B cell (primary cell): ENCODE measurements at regions of chr18 and their contacts with region 1.

Region 1: GRCh38 chr18:50429207-50429948 is 54.5 kb downstream of the SKA1 start:
- DNase-seq: peak; percentile 48
- ATAC-seq: no peak
- H3K4me3 ChIP-seq: no peak overlapping the region
- H3K4me3 Mint-ChIP-seq: no peak overlapping the region
- H3K27ac ChIP-seq: no peak overlapping the region
- H3K27ac Mint-ChIP-seq: no peak overlapping the region
- H3K4me1 ChIP-seq: no peaks in the 10 kb centered on the region
- H3K4me1 Mint-ChIP-seq: no peaks in the 10 kb centered on the region
- H3K27me3 ChIP-seq: peaks cover 0 to 9% (median 5%) of the 10 kb centered on the region in 4 experiments
- H3K27me3 Mint-ChIP-seq: peaks cover 19% of the 10 kb centered on the region
- CTCF ChIP-seq: peak; percentile 75

Region 2: DNA sequence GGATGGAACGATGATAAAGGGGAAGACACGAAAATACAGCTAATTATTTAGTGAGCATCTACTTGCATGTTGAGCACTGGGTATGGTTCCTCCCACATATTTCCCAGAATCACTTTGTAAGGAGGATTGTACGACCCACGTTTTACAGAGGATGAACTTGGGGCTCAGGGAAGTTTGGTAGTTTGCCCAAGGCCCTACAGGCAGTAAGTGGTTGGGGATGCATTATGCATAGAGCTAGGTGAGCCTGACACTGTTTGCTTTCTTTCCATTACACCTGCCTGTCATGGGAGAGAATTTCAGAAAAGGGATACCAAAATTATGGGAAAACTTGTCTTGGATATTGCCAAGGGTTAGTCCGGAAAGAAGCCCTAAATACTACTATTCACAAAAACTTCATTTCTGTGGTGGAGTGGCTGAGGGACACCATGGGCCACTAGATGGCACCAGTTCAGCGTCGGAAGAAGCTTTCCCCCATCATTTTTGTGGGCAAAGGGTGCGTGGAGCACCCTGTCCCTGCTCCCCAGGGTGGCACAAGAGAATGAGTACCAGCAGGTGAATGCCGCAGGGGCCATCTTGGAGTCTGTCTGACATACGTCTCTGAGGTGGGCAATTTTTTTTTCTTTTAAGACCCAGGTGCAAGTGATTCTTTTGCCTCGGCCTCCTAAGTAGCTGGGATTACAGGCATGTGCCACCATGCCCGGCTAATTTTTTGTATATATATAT is 918.8 kb before region 1 on chr18:
- CTCF ChIA-PET with region 1: interaction called, 24 read pairs
- POLR2A ChIA-PET with region 1: no interaction called
- intact Hi-C with region 1: no loop called
- DNase-seq: peak; percentile 70
- ATAC-seq: peak; percentile 39
- H3K4me3 ChIP-seq: no peak overlapping the region
- H3K4me3 Mint-ChIP-seq: no peak overlapping the region
- H3K27ac ChIP-seq: no peak overlapping the region
- H3K27ac Mint-ChIP-seq: no peak overlapping the region
- H3K4me1 ChIP-seq: no peaks in the 10 kb centered on the region
- H3K4me1 Mint-ChIP-seq: no peaks in the 10 kb centered on the region
- H3K27me3 ChIP-seq: peaks cover 0 to 3% (median 0%) of the 10 kb centered on the region in 4 experiments
- H3K27me3 Mint-ChIP-seq: peaks cover 22% of the 10 kb centered on the region
- CTCF ChIP-seq: peak; percentile 82

Region 3: GRCh38 chr18:50009773-50010335 is 419.5 kb before region 1 on chr18:
- CTCF ChIA-PET with region 1: interaction called, 5 read pairs
- POLR2A ChIA-PET with region 1: no interaction called
- intact Hi-C with region 1: loop called (anchors 5 kb)
- DNase-seq: peak; percentile 66
- ATAC-seq: peak; percentile 47
- H3K4me3 ChIP-seq: no peak overlapping the region
- H3K4me3 Mint-ChIP-seq: no peak overlapping the region
- H3K27ac ChIP-seq: no peak overlapping the region
- H3K27ac Mint-ChIP-seq: no peak overlapping the region
- H3K4me1 ChIP-seq: no peaks in the 10 kb centered on the region
- H3K4me1 Mint-ChIP-seq: no peaks in the 10 kb centered on the region
- H3K27me3 ChIP-seq: no peaks in the 10 kb centered on the region
- H3K27me3 Mint-ChIP-seq: peaks cover 22% of the 10 kb centered on the region
- CTCF ChIP-seq: peak; percentile 62

Region 4: DNA sequence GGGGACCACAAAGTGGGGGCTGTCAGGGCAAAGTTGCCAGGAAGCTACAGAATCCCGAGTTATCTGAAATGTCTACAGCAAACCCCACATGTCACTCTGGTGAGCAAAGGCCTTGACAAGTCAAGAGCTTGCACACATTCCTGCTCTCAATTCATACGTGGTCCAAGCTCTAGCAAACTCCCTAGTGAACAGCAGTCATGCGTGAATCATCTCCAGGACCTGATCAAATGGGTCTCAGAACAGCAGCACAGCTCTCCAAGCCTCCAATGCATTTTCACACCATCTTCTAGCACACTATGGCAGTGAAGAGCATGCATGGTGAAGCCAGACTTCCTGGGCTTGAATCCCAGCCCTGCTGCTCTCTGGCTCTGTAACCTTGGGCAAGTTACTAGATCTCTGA is 302.9 kb before region 1 on chr18:
- CTCF ChIA-PET with region 1: no interaction called
- POLR2A ChIA-PET with region 1: no interaction called
- intact Hi-C with region 1: no loop called
- DNase-seq: no peak
- ATAC-seq: no peak
- H3K4me3 ChIP-seq: no peak overlapping the region
- H3K4me3 Mint-ChIP-seq: no peak overlapping the region
- H3K27ac ChIP-seq: no peak overlapping the region
- H3K27ac Mint-ChIP-seq: no peak overlapping the region
- H3K4me1 ChIP-seq: no peaks in the 10 kb centered on the region
- H3K4me1 Mint-ChIP-seq: no peaks in the 10 kb centered on the region
- H3K27me3 ChIP-seq: peaks cover 0 to 6% (median 2%) of the 10 kb centered on the region in 4 experiments
- H3K27me3 Mint-ChIP-seq: peaks cover 47% of the 10 kb centered on the region
- CTCF ChIP-seq: no peak

Region 5: DNA sequence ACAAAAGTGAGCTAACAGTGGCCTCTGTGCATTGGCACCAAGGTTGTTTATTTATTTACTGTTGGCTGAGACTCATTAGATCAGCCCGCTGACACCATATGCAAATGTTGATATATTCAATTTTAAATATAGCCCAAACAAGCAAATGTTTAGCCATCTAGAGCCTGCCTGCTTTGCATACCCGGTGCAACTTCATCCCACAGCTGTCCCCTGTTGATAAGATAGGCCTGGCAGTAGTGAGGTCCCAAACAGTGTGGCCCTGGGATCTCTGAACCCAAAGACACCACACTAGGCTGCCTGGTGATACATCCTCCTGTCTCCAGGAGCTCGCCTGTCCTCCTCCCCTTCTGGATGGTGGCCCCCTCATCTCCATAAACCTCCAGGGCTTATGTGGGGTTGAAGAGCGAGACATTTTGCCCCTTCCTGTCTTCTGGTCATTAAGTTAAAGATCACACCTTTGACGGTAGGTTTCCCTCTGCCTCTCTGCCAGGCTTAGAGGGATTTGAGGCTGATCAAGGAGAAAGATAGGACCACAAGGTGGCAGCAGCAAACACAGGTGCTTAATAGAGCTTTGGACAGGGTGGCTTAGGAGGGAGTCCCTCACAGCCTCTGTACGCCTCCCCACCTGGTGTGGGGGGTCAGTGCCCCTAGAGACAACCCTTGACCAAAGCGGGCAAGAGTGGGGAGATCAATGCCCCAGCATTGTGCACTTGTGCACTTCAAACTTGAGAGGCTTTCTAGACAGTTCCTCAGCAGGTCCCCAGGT is 210.8 kb before region 1 on chr18:
- CTCF ChIA-PET with region 1: interaction called, 17 read pairs
- POLR2A ChIA-PET with region 1: no interaction called
- intact Hi-C with region 1: no loop called
- DNase-seq: peak; percentile 74
- ATAC-seq: peak; percentile 56
- H3K4me3 ChIP-seq: no peak overlapping the region
- H3K4me3 Mint-ChIP-seq: no peak overlapping the region
- H3K27ac ChIP-seq: no peak overlapping the region
- H3K27ac Mint-ChIP-seq: no peak overlapping the region
- H3K4me1 ChIP-seq: peaks cover 4 to 10% of the 10 kb centered on the region in 2 donors
- H3K4me1 Mint-ChIP-seq: peaks cover 5% of the 10 kb centered on the region
- H3K27me3 ChIP-seq: peaks cover 0 to 24% (median 2%) of the 10 kb centered on the region in 4 experiments
- H3K27me3 Mint-ChIP-seq: peaks cover 40% of the 10 kb centered on the region
- CTCF ChIP-seq: peak; percentile 62

Region 6: GRCh38 chr18:50460716-50461115 is 31.3 kb after region 1 on chr18:
- CTCF ChIA-PET with region 1: no interaction called
- POLR2A ChIA-PET with region 1: no interaction called
- intact Hi-C with region 1: no loop called
- DNase-seq: no peak
- ATAC-seq: no peak
- H3K4me3 ChIP-seq: no peak overlapping the region
- H3K4me3 Mint-ChIP-seq: no peak overlapping the region
- H3K27ac ChIP-seq: no peak overlapping the region
- H3K27ac Mint-ChIP-seq: no peak overlapping the region
- H3K4me1 ChIP-seq: no peaks in the 10 kb centered on the region
- H3K4me1 Mint-ChIP-seq: no peaks in the 10 kb centered on the region
- H3K27me3 ChIP-seq: no peaks in the 10 kb centered on the region
- H3K27me3 Mint-ChIP-seq: peaks cover 10% of the 10 kb centered on the region
- CTCF ChIP-seq: no peak